ENCODE measurements at regions of chr9 and their contacts with region 1.

Region 1: DNA sequence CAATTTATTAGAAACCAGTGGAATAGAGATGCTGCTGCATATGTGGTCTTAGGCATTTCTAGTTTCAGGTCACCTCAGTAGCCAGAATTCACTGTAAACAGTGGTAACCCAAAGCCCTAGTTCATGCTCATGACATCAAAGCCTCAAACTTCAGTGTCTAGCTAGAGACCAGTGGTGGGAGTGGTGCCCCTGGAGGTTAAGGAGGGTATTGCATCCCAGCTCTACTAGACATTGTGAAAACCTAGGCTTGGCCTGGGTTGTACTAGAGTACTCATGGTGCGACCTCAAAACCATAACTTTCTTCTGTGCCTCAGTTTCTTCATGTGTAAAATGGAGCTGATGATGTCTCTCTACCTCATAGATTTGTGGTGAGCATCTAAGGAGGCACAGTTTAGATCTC is 18.8 kb downstream of the COL5A1 start:
- DNase-seq: no peak

Region 2: DNA sequence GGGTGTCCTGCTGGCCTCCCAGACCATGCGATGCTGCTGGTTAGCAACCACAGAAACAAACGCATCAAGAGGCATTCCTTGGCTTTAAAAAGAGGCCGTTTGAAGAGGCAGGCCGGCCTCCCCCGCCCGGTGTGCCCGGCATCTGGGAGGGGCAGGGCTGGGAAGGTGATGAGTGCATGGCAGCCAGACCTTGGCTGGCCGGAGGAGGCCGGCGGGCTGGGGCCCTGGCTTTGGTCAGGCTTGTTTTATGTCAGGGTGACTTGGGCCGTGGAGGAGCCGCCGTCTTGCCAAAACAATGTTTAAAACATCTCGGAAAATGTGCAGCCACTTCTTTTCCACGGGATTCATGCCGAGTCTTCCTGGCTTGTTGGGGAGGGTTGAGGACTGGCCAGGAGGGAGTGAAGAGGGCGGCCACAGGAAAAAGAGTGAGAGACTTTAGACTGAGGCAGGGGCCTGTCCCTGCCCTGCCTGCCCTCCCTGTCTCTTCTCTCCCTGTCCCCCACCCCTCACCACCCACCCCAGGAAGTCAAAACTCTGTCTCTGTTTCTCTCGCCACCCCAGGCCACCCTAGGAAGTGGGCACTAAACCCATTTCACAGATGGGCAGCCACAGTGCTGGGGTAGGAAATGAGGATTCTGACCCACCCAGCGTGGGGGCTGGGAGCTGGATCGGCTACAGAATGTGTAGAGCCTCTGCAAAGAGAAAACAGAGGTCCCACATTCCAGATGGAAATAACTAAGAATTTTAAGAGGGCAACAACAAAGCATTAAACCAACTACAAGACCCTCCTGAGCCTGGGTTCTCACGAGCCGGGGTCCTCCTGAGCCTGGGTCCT is 191.1 kb before region 1 on chr9:
- intact Hi-C with region 1: loop called in 1 of 2 experiments (anchors 10 kb)
- DNase-seq: peak; percentile 91

Region 3: DNA sequence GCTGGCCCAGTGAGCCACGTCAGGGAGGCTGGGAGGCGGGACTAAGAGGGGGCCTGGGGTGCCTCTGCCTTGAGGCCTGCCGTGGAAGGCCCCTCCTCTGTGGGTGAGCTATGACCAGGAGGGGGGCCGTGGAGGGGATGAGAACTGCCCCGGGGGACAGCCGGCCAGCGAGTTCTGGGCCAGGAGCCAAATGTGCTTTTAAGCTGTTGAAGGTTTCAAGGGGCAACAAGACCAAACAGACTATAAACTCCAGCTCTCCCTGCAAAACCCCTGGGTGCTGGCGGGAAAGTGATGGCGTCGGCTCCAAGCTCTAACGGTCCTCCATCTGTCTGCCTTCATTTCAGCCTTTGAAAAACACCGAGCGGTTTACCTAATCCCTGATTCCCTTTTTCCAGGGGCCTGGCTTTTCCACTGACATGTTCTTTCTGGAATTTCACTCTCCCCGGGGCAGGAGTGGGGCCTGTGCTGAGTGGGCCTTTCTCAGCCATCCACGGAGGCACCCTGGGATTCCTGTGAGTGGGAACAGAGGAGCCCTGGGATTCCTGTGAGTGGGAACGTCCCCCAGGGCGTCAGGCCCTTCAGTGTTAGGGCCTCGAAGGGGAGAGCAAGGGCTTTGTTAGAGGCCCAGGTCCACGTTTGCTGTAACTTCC is 46.7 kb after region 1 on chr9:
- intact Hi-C with region 1: no loop called
- DNase-seq: peak; percentile 95

Region 4: DNA sequence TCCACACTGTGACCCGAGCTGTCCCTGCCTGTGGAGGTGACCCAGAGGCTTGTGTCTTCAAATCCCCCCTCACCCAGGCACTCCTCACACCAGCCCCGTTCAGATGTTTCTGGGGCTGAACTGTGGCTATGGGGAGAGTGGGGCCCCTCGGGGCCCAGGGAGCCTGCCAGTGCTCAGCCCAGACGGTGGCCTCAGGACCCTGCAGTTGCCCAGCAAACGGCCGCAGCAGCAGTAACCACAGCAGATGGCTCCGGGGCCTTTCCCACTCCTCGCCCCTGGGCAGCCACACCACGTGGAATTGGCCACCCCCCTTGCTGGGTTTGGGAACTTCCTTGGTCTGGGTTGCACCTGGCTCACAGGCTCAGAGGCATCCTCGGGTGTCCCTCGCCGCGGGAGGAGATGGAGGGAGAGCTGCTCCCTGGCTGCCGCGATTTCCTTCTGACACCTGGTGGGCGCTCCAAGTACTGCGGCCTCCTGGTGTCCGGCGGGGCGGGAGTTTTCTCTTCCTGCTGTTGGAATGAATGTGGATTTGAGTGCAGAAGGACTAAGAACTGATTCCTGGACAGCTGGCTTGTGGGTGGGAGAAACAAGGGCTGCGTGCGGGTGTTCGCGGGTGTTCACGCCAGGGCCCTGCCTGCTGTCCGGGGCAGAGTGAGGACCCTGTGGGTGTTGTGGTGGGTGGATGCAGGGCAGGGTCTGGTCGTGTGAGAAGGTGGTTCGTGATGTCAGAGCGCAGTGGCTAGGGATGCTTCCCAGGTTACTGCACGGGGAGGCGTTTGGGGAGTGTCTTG is 78.7 kb after region 1 on chr9:
- intact Hi-C with region 1: no loop called
- DNase-seq: peak; percentile 90

Region 5: DNA sequence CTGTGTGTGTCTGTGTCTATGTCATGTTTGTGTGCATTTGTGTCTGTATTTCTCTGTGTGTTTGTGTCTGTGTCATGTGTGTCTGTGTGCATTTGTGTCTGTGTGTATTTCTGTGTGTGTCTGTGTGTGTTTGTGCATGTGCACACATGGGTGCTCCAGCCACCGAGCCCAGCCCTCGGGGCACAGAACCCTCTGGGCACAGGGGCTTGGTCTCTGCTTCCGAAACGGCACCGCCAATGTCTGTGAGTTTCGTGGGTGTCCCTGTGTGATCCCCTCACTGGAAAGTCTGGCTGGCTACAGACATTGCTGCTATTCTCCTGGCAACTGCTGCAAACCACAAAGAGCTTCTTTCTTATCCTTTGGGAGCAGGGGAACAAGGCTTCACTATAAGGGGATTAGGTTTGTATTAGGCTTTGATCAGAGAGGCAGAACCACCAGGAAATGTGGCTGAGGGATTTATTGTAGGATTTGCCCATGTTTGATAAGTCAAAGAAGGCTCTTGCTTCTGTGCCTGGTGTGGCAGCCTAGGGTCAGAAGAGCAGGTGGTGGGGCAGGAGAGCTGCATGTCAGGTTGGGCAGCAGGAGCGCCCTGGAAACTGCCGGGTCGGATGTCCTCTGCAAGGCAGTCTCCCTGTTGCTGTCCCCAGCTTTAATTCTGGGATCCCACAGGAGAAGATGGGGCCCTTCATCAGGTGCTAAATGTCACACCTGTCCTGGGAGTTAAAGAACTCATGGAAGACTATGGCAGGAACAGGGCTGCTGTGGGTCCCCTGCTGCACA is 296.9 kb after region 1 on chr9:
- intact Hi-C with region 1: no loop called
- DNase-seq: no peak